ENCODE measurements at regions of chr12 and their contacts with region 1.

Region 1: GRCh38 chr12:122980183-122981046 is at the start of gene ARL6IP4:
- DNase-seq: peak; percentile 63 to 78
- ATAC-seq: peak; percentile 82 to 87 (median 84)
- H3K4me3 ChIP-seq: peak within 1 kb of the TSS; percentile 70
- H3K4me3 Mint-ChIP-seq: peak within 1 kb of the TSS; percentile 87
- H3K27ac ChIP-seq: peak within 1 kb of the TSS; percentile 61
- H3K27ac Mint-ChIP-seq: peak within 1 kb of the TSS; percentile 66 to 86
- H3K4me1 ChIP-seq: peaks cover 76% of the 10 kb centered on the region
- H3K4me1 Mint-ChIP-seq: peaks cover 28 to 59% of the 10 kb centered on the region in 2 donors
- H3K27me3 ChIP-seq: no peaks in the 10 kb centered on the region
- H3K27me3 Mint-ChIP-seq: no peaks in the 10 kb centered on the region
- CTCF ChIP-seq: peak; percentile 6
- total RNA-seq, gene ARL6IP4: 97.2 to 136 (median 116) TPM

Region 2: GRCh38 chr12:123150744-123151456 is 170.5 kb after region 1 on chr12 and contains the start of gene PITPNM2:
- intact Hi-C with region 1: loop called (anchors 5 kb)
- DNase-seq: peak; percentile 58 to 77
- ATAC-seq: peak; percentile 89 to 90 (median 90)
- H3K4me3 ChIP-seq: peak within 1 kb of the TSS; percentile 40
- H3K4me3 Mint-ChIP-seq: peak within 1 kb of the TSS; percentile 86
- H3K27ac ChIP-seq: no peak within 1 kb of the TSS
- H3K27ac Mint-ChIP-seq: peak within 1 kb of the TSS; percentile 65 to 71
- H3K4me1 ChIP-seq: peaks cover 29% of the 10 kb centered on the region
- H3K4me1 Mint-ChIP-seq: peaks cover 36 to 39% of the 10 kb centered on the region in 2 donors
- H3K27me3 ChIP-seq: no peaks in the 10 kb centered on the region
- H3K27me3 Mint-ChIP-seq: no peaks in the 10 kb centered on the region
- CTCF ChIP-seq: no peak
- total RNA-seq, gene PITPNM2: 38.9 to 94.6 (median 42.5) TPM